Mammary epithelial cell (primary cell): ENCODE measurements at regions of chr3 and their contacts with region 1.

Region 1: GRCh38 chr3:180478695-180479094 is 123.3 kb upstream of the TTC14 start:
- DNase-seq: no peak
- H3K4me3 ChIP-seq: no peak overlapping the region
- H3K27ac ChIP-seq: no peak overlapping the region
- H3K4me1 ChIP-seq: no peaks in the 10 kb centered on the region
- H3K27me3 ChIP-seq: no peaks in the 10 kb centered on the region
- CTCF ChIP-seq: no peak

Region 2: GRCh38 chr3:180447136-180447535 is 31.6 kb before region 1 on chr3:
- CTCF ChIA-PET with region 1: no interaction called
- dilution Hi-C with region 1: loop called (anchors 5 kb)
- in situ Hi-C with region 1: no loop called
- intact Hi-C with region 1: no loop called
- DNase-seq: peak; percentile 62
- H3K4me3 ChIP-seq: no peak overlapping the region
- H3K27ac ChIP-seq: no peak overlapping the region
- H3K4me1 ChIP-seq: peaks cover 15% of the 10 kb centered on the region
- H3K27me3 ChIP-seq: no peaks in the 10 kb centered on the region
- CTCF ChIP-seq: no peak